Calu3 (cell line): ENCODE measurements at regions of chr1 and their contacts with region 1.

Region 1: DNA sequence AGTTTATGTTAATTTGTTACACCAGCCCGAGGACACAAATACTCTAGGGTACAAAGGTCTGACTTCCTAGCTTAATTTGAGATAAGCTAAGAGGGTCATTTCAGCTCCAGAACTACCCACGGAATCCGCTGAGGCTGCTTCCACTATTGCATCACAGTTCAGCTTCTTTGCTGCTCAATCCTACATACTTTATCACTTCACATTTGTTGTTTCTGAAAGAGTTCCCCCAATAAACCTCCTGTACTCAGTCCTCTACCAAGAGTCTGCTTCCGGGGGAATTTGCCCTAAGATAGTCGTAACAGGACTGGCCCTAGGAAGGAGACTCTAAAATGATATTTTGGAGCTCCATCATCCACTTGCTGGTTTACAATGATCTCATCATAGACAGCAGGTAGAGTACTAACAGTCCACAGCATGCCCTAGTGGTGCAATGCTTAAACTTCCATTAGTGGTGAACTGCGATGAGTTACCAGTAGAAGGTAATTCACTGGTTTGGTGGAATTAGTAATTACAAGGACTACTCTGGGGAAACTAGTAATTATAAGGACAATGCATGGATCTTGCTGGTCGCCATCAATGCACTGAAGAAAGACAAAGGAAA is 229.3 kb downstream of the USH2A start:
- DNase-seq: peak; percentile 36
- H3K4me3 Mint-ChIP-seq: peak overlapping the region; percentile 1
- H3K27ac Mint-ChIP-seq: no peak overlapping the region
- H3K4me1 Mint-ChIP-seq: peaks cover 14% of the 10 kb centered on the region
- H3K27me3 Mint-ChIP-seq: no peaks in the 10 kb centered on the region
- CTCF ChIP-seq: peak; percentile 22

Region 2: DNA sequence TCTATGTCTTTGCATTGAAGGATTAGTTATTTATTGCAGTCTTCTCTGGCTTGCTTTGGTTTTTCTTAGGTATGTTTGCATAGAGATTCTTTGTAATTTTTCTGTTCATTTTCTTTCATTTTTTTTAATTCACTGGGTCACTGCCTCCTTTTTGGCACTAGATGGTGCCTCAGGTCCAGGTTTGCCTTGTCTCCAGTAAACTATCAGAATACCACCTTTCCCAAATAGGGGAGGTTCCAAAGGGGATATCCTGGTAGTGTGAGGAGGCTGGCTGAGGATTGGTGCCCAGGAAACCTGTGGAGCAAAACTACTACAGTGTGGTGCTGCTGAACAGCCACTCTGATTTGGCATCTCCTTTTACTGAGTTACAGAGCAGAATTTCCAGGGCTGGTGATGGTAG is 369.7 kb before region 1 on chr1:
- CTCF ChIA-PET with region 1: no interaction called
- intact Hi-C with region 1: no loop called
- DNase-seq: peak; percentile 21
- H3K4me3 Mint-ChIP-seq: no peak overlapping the region
- H3K27ac Mint-ChIP-seq: no peak overlapping the region
- H3K4me1 Mint-ChIP-seq: no peaks in the 10 kb centered on the region
- H3K27me3 Mint-ChIP-seq: no peaks in the 10 kb centered on the region
- CTCF ChIP-seq: peak; percentile 57

Region 3: DNA sequence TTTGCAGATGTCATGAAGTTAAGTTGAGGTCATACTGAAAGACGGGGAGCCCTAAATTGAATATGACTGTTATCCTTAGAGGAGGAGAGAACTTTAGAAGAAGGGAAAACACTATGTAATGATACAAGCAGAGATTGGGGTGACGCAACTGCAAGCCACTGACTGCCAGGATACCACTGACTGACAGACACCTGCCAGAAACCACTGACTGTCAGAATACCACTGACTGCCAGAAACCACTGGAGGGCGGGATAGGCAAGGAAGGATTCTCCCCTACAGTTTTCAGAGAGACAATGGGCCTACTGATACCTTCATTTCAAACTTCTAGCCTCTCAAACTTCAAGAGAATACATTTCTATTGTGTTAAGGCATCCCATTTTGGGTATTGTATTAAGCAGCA is 159.4 kb before region 1 on chr1:
- CTCF ChIA-PET with region 1: no interaction called
- intact Hi-C with region 1: loop called (anchors 2 kb)
- DNase-seq: peak; percentile 41
- H3K4me3 Mint-ChIP-seq: no peak overlapping the region
- H3K27ac Mint-ChIP-seq: no peak overlapping the region
- H3K4me1 Mint-ChIP-seq: no peaks in the 10 kb centered on the region
- H3K27me3 Mint-ChIP-seq: no peaks in the 10 kb centered on the region
- CTCF ChIP-seq: no peak

Region 4: DNA sequence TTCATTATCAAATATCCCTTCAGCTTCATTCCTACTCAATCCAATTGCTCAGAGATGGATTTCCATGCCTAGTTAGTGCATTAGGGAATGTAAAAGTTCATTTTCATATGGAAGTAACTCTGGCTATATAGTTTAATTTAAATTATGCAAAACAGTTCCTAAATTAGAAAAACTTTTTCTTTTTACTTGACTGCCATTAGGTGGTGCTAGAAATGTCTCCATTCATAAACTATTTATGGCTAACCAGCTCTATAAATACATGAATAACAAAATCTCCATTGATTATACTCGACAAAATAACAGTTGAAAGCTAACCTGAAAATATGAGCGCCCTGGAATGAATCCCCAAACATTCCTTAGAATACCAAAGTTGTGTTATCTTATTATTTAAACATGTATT is 82.1 kb before region 1 on chr1:
- CTCF ChIA-PET with region 1: interaction called, 9 read pairs
- intact Hi-C with region 1: loop called (anchors 5 kb)
- DNase-seq: no peak
- H3K4me3 Mint-ChIP-seq: no peak overlapping the region
- H3K27ac Mint-ChIP-seq: no peak overlapping the region
- H3K4me1 Mint-ChIP-seq: no peaks in the 10 kb centered on the region
- H3K27me3 Mint-ChIP-seq: no peaks in the 10 kb centered on the region
- CTCF ChIP-seq: peak; percentile 25

Region 5: DNA sequence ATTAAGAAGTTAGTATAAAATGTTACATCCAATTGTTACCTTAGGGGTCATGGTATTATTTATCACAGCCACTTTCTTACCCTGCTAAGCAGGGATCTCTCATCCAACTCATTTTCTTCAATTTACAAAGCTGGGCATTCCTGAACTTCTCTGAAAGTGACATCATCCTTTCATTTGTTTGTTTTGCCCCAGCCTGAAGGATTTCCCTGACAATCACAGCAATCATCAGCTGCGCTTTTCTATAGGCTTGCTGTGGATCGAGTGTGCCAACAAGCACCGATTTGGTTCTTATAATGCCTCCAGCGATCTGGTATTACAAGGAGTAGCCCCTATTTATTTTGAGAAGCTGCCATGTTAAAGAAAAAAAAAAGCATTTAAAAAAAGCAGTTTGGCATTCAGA is 10.9 kb before region 1 on chr1:
- CTCF ChIA-PET with region 1: no interaction called
- intact Hi-C with region 1: no loop called
- DNase-seq: peak; percentile 26
- H3K4me3 Mint-ChIP-seq: no peak overlapping the region
- H3K27ac Mint-ChIP-seq: no peak overlapping the region
- H3K4me1 Mint-ChIP-seq: peaks cover 46% of the 10 kb centered on the region
- H3K27me3 Mint-ChIP-seq: no peaks in the 10 kb centered on the region
- CTCF ChIP-seq: no peak

Region 6: DNA sequence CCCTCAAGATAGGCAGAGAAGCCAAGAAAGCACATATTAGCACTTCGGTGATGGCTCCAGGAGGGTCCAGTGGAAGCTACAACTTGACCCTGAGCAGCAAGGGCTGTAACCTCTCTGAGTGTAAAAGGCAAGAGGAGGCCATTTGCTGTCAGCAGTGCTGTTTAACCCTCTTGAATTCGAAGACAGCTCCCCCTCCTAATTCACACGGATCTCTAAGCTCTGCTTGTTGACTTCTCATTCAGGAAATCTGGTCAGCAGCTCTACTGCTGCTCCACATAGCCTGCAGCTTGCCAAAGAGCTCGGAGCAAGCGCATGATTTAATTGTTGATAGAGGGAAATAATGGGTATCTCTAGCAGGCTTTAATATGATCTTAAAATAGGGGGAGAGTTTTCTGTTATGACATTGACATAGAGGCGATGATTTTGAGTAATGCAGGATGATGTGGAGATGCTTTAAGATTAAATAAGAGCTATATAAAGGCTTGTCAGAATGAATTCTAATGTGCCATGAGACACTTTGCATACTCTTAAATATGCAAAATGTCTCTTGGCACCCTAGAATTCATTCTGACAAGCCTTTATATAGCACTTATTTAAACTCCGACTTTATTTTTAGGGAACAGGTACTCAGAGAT is 308.7 kb after region 1 on chr1:
- CTCF ChIA-PET with region 1: no interaction called
- intact Hi-C with region 1: no loop called
- DNase-seq: no peak
- H3K4me3 Mint-ChIP-seq: no peak overlapping the region
- H3K27ac Mint-ChIP-seq: no peak overlapping the region
- H3K4me1 Mint-ChIP-seq: peaks cover 14% of the 10 kb centered on the region
- H3K27me3 Mint-ChIP-seq: no peaks in the 10 kb centered on the region
- CTCF ChIP-seq: no peak

Region 7: DNA sequence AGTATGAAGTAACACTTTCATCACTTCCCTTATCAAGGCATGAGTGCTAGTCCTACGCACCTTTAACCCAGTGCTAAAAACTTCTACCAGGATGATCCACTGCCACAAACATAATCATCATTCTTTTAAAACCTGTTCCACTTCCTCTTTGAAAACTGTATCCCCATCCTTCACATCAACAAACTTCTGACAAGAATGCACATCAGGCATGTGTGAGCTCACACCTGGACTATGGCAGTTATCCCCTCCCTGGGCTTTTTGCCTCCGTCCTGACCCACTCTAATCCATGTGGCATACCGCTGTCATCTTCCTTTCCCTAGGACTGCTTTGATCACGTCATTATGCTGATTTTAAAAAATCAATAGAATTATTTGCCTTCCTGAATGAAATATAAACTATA is 459.1 kb after region 1 on chr1:
- CTCF ChIA-PET with region 1: no interaction called
- intact Hi-C with region 1: no loop called
- DNase-seq: no peak
- H3K4me3 Mint-ChIP-seq: no peak overlapping the region
- H3K27ac Mint-ChIP-seq: no peak overlapping the region
- H3K4me1 Mint-ChIP-seq: no peaks in the 10 kb centered on the region
- H3K27me3 Mint-ChIP-seq: no peaks in the 10 kb centered on the region
- CTCF ChIP-seq: no peak